GM18951 (cell line): ENCODE measurements at regions of chr5 and their contacts with region 1.

Region 1: DNA sequence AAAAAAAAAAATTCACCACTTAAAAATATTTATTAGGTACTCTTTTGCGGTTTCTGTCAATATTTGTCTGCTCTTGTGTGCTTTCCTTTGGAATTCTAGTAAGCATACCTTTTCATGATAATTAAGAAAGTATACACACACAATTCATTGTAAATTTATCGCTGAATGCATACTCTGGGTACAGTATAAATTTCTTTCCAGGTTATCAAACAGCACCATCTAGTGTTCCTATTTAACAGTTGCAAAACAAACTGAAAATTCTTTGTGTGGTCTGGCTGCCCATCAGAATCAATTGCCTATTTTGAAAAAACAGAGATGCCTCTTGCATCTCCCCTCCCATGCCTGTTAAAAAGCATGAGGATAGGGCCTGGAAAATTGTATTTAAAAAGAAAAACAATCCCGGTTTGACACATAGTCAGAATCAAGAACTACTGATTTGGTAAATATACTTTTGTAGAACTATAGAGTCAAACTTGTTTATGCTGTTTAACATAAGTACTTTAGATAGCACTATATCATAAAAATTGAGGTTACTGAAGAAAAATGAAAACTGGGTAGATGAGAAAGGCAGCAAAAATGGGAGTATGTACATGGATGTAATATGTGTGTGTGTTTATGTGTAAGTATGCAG is 16.2 kb downstream of the PGGT1B start:
- POLR2A ChIP-seq: no peak

Region 2: GRCh38 chr5:115098041-115098702 is 148.3 kb before region 1 on chr5:
- in situ Hi-C with region 1: loop called (anchors 10 kb)
- POLR2A ChIP-seq: no peak